Lower lobe of right lung (tissue), 2 donors: ENCODE measurements at regions of chr7 and their contacts with region 1.

Region 1: DNA sequence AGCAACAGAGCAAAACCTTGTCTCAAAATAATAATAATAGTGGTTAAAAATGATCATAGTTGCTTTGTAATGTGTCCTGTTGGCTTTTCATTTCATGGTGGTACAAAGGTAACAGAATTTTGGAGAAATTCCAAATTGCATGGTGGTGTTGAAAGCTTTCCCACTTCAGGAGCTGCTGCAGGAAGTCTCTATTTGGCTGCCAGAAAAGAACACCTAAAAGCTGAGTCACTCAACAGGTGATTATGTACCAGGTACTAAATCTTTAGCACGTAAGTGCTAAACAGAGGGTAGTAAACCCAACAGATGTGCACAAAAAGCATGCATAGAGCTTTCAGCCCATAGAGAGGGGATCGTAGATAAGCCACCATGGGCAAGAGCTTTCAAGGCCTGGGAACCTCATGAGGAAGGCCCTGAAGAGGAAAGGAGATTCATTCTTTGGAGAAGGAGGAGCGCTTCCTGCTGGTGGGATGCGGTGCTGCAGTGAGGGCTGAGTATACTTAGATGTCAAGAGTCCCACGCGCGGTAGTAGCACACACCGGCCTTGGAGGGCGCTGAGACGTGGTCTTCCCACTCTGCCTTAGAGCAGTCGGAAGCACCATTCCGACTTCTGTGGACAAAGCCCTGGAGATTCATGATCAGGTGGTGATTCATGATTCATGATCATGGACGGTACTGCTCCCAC is 118.7 kb downstream of the RALA start:
- DNase-seq: peak; percentile 72
- ATAC-seq: peak; percentile 75 to 83
- H3K4me3 ChIP-seq: no peak overlapping the region
- H3K27ac ChIP-seq: no peak overlapping the region
- H3K4me1 ChIP-seq: peaks cover 10% of the 10 kb centered on the region
- H3K27me3 ChIP-seq: no peaks in the 10 kb centered on the region
- CTCF ChIP-seq: peak; percentile 73

Region 2: GRCh38 chr7:39589323-39590111 is 152.6 kb before region 1 on chr7:
- intact Hi-C with region 1: loop called (anchors 5 kb)
- DNase-seq: no peak
- ATAC-seq: peak; percentile 84 to 86
- H3K4me3 ChIP-seq: no peak overlapping the region
- H3K27ac ChIP-seq: peak overlapping the region; percentile 28
- H3K4me1 ChIP-seq: peaks cover 14% of the 10 kb centered on the region
- H3K27me3 ChIP-seq: no peaks in the 10 kb centered on the region
- CTCF ChIP-seq: no peak

Region 3: DNA sequence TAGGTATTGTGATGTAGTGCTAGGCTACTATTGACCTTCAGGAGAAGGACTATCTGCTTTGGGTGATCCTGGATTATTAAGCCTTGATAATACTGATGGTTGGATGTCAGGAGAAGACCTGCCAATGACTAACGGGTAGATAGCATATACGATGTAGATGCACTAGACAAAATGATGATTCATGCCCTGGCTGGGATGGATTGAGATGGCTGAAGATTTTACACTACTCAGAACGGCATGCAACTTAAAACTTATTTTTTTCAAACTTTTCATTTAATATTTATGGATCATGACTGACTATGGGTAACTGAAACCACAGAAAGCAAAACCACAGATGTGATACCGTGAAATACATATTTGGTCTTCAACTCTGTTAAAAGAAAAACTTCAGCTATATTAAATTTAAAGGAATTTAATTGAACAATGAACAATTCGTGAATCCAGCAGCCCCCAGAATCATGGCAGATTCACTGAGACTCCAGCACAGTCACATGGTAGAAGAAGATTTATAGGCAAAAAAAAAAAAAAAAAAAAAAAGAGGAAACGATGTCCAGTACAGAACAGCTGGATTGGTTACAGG is 83.4 kb after region 1 on chr7:
- intact Hi-C with region 1: no loop called
- DNase-seq: no peak
- ATAC-seq: no peak
- H3K4me3 ChIP-seq: no peak overlapping the region
- H3K27ac ChIP-seq: no peak overlapping the region
- H3K4me1 ChIP-seq: no peaks in the 10 kb centered on the region
- H3K27me3 ChIP-seq: peaks cover 34% of the 10 kb centered on the region
- CTCF ChIP-seq: no peak